Heart left ventricle (tissue), 16 donors: ENCODE measurements at regions of chr11 and their contacts with region 1.

Region 1: GRCh38 chr11:3123761-3124733 is 41.1 kb downstream of the OSBPL5 start:
- DNase-seq: peak; percentile 64 to 91 (median 82)
- ATAC-seq: peak; percentile 35 to 82 (median 65)
- H3K4me3 ChIP-seq: no peak overlapping the region
- H3K27ac ChIP-seq: peak overlapping the region in 11 of 12 donors; percentile 19 to 82 (median 56)
- H3K4me1 ChIP-seq: peaks cover 3 to 48% (median 30%) of the 10 kb centered on the region in 12 donors
- H3K27me3 ChIP-seq: no peaks in the 10 kb centered on the region
- CTCF ChIP-seq: no peak
- POLR2A ChIP-seq: no peak

Region 2: DNA sequence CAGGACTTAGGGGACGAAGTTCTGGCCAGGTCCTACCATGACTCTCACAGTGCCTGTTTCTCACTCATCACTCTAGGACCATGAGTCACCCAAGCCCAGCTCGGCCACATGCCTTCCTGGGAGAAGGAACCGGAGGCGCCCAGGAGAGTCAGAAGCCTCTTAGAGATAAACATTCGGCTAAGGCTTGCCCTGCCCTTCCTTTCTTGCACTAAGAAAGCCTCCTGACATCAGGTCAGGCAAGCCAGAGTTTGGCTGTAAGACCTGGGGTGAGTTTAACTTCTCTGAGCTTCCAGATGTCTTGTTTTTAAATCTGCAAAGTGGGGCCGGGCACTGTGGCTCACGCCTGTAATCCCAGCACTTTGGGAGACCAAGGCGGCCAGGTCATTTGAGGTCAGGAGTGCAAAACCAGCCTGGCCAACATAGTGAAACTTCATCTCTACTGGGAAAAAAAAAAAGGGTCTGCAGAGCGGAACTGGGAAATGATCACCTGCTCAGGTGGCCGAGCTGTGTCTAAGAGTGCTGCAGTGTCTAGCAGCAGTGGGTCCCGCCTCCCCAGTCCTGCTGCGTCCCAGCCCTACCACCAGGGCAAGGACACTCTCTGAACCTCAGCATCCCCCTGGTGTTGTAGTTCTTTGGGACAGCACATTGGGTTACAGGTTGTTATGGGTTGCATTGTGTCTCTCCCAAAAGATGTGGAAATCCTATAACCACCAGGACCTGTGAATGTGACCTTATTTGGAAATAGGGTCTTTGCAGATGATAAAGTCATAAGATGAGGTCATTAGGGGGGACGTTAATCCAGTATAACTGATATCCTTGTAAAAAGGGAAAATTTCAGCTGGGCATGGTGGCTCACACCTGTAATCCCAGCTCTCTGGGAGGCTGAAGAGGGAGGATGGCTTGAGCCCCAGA is 65.0 kb before region 1 on chr11:
- intact Hi-C with region 1: no loop called
- DNase-seq: peak in 1 of 5 donors; percentile 24
- ATAC-seq: no peak
- H3K4me3 ChIP-seq: no peak overlapping the region
- H3K27ac ChIP-seq: peak overlapping the region in 3 of 12 donors; percentile 9 to 34 (median 16)
- H3K4me1 ChIP-seq: peaks cover 0 to 33% (median 17%) of the 10 kb centered on the region in 12 donors
- H3K27me3 ChIP-seq: no peaks in the 10 kb centered on the region
- CTCF ChIP-seq: no peak
- POLR2A ChIP-seq: no peak

Region 3: GRCh38 chr11:3153291-3153861 is 29.3 kb after region 1 on chr11:
- intact Hi-C with region 1: no loop called
- DNase-seq: peak; percentile 73 to 85 (median 74)
- ATAC-seq: peak; percentile 56 to 82 (median 78)
- H3K4me3 ChIP-seq: peak overlapping the region in 2 of 12 donors; percentile 6
- H3K27ac ChIP-seq: peak overlapping the region in 11 of 12 donors; percentile 15 to 88 (median 68)
- H3K4me1 ChIP-seq: peaks cover 4 to 87% (median 53%) of the 10 kb centered on the region in 12 donors
- H3K27me3 ChIP-seq: no peaks in the 10 kb centered on the region
- CTCF ChIP-seq: no peak
- POLR2A ChIP-seq: no peak

Region 4: DNA sequence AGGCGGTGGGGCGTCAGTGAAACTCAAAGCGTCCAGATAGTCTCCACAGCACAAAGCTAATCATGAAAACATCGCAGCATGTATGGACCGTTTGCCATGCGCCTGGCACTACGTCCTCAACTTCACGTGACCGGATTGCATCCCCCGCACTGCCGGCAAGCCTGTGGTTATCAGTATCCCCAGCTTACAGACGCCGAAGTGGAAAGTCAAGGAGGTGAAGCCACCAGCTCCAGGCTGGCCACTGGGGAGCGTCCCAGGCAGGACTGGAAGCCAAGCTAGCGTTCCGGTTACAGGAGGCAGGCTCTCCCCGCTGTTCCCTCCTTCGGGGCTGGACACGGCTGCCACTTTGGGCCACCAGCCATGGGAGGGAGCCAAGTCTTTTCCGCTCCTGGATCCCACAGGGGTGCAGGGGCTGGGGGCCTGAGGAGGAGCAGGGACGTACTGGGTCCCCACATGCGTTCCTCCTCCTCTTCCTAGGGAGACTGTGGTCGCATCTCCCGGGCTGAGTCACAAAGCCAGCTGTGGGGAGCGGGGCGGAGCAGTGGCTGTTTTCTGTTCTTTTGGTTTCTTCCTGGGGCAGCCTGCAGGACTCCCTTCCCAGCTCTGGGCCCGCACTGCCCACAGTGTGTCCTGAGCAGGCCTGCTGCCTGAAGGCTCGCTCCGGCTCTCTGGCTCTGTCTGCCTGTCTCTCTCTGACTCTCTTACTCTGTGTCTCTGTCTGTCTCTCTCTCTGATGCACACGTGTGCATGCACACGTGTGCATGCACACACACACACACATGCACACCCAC is 45.4 kb after region 1 on chr11:
- intact Hi-C with region 1: loop called in 3 of 10 experiments (anchors 2 to 5 kb)
- DNase-seq: peak in 4 of 5 donors; percentile 48 to 67 (median 58)
- ATAC-seq: peak; percentile 48 to 69 (median 66)
- H3K4me3 ChIP-seq: peak overlapping the region in 11 of 12 donors; percentile 0 to 57 (median 45)
- H3K27ac ChIP-seq: peak overlapping the region in 10 of 12 donors; percentile 34 to 71 (median 58)
- H3K4me1 ChIP-seq: peaks cover 0 to 31% (median 24%) of the 10 kb centered on the region in 12 donors
- H3K27me3 ChIP-seq: no peaks in the 10 kb centered on the region
- CTCF ChIP-seq: peak in 3 of 12 donors; percentile 6 to 27 (median 21)
- POLR2A ChIP-seq: peak in 1 of 2 donors; percentile 27

Region 5: DNA sequence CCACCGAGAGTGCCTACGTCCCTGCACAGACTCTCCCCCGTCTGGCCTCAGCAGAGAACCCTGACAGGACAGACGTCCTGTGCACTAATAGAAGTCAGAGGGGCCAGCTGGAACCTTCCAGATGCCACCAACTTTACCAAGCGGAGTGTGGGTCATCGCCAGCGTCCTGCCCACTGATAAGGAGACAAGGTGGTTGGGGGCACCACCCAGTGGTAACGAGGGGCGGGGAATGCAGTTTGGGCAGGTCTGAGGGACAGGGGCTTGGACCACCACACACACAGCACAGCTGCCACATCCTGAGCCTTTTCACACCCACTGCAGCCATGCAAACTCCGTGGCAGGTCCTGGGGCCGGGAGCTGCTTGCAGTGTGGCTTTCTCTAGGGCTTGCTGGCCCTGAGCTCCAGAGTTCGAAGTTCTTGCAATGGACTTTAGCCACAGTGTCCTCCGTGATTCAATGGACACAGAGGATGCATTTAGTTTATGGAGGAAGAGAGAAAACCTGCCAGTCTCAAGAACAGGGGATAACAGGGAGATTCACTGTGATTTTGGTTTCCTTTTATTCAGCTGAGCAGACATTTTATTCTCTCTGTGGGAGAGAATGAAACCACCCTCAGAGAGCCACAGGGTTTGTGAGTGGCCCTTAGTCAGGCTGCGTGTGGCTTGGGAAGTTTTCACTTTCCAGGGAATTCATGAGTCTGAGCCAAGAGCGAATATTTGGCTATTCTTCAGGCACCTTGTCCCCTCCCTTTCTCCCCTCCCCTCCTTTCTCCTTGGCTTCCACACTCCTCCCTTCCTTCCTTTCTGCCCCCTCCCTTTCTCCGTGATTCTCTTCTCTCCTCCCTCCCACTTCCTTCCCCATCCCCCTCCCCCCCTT is 81.5 kb after region 1 on chr11:
- intact Hi-C with region 1: loop called in 1 of 10 experiments (anchors 5 kb)
- DNase-seq: peak in 2 of 5 donors; percentile 11 to 44
- ATAC-seq: no peak
- H3K4me3 ChIP-seq: no peak overlapping the region
- H3K27ac ChIP-seq: no peak overlapping the region
- H3K4me1 ChIP-seq: peaks cover 0 to 19% (median 8%) of the 10 kb centered on the region in 12 donors
- H3K27me3 ChIP-seq: peaks cover 15 to 44% (median 34%) of the 10 kb centered on the region in 9 donors
- CTCF ChIP-seq: no peak
- POLR2A ChIP-seq: no peak